Natural killer cell (primary cell): ENCODE measurements at regions of chr10 and their contacts with region 1.

Region 1: DNA sequence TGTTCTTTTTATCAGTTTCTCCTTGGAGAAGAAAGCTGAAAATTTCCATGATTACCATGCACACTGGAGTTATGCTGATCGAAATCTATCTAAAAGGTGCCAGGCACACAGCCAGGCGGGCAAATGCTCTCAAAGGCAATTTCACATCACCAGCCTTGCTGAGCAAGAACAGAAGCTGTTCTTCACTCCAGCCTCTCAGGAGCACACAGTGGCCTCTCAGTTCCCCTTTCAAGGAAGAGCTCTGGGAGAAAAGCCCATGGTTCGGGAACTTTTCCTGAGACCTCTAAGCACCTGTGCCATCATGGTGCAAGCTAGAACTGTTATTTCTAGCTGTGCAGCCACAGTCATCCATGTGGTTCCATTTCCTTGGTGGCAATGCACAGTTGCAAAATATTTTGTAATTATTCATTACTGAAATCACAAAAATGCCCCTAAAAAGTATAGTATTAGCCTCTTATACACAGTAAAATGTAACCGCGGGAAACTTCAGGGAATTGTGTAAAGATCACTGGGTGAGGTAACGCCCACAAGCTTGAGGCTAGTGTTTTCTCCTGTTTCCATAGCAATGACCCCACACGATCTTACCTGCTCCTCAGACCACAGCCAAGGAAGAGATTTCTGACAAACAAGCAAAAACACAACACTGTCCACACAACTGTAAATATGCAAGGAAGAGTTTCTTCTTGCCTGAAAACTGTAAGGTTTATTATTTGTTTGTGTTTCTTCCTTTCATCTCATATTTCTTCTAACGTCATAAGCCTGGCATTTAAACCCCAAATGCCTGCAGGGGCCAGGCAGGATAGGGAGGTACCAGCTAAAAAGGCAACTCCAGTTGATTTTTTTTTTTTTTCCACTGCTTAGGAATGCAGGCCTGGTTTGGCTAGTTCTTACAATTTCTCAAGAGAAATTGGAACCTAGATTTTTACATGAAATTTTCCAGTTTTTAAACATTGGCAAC is 121.1 kb downstream of the FAM107B start:
- DNase-seq: peak in 1 of 2 donors; percentile 73
- ATAC-seq: peak in 1 of 3 donors; percentile 54
- H3K4me3 ChIP-seq: no peak overlapping the region
- H3K4me3 Mint-ChIP-seq: no peak overlapping the region
- H3K27ac ChIP-seq: peak overlapping the region; percentile 0
- H3K27ac Mint-ChIP-seq: peak overlapping the region; percentile 31 to 51
- H3K4me1 ChIP-seq: peaks cover 43% of the 10 kb centered on the region
- H3K4me1 Mint-ChIP-seq: peaks cover 54 to 57% of the 10 kb centered on the region in 2 donors
- H3K27me3 ChIP-seq: no peaks in the 10 kb centered on the region
- H3K27me3 Mint-ChIP-seq: no peaks in the 10 kb centered on the region
- CTCF ChIP-seq: no peak

Region 2: DNA sequence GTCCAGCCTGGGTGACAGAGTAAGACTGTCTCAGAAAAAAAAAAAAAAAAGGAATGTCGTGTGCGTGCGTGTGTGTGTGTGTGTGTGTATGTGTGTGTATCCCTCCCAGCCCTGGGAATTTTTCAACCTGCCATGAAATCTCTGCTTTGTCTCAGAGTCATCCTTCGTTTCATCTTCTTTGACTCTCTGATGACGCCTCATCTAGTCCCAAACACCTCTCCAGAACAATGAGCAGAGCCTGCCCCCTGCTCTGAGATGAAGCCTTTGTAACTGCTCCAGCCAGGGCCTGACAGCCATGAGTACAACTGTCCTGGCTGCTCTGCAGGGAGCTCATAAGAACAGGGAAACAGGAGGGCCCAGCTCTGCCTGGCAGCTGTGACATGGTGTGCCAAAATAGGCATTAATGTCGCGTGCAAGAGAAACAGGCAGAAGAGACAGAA is 28.3 kb before region 1 on chr10:
- intact Hi-C with region 1: no loop called
- DNase-seq: no peak
- ATAC-seq: no peak
- H3K4me3 ChIP-seq: no peak overlapping the region
- H3K4me3 Mint-ChIP-seq: no peak overlapping the region
- H3K27ac ChIP-seq: no peak overlapping the region
- H3K27ac Mint-ChIP-seq: no peak overlapping the region
- H3K4me1 ChIP-seq: no peaks in the 10 kb centered on the region
- H3K4me1 Mint-ChIP-seq: no peaks in the 10 kb centered on the region
- H3K27me3 ChIP-seq: no peaks in the 10 kb centered on the region
- H3K27me3 Mint-ChIP-seq: no peaks in the 10 kb centered on the region
- CTCF ChIP-seq: no peak

Region 3: GRCh38 chr10:14751014-14751896 is 97.7 kb after region 1 on chr10:
- intact Hi-C with region 1: loop called (anchors 10 kb)
- DNase-seq: no peak
- ATAC-seq: no peak
- H3K4me3 ChIP-seq: no peak overlapping the region
- H3K4me3 Mint-ChIP-seq: no peak overlapping the region
- H3K27ac ChIP-seq: peak overlapping the region; percentile 79
- H3K27ac Mint-ChIP-seq: no peak overlapping the region
- H3K4me1 ChIP-seq: peaks cover 22% of the 10 kb centered on the region
- H3K4me1 Mint-ChIP-seq: no peaks in the 10 kb centered on the region
- H3K27me3 ChIP-seq: no peaks in the 10 kb centered on the region
- H3K27me3 Mint-ChIP-seq: no peaks in the 10 kb centered on the region
- CTCF ChIP-seq: no peak